ENCODE measurements at regions of chr12 and their contacts with region 1.

Region 1: DNA sequence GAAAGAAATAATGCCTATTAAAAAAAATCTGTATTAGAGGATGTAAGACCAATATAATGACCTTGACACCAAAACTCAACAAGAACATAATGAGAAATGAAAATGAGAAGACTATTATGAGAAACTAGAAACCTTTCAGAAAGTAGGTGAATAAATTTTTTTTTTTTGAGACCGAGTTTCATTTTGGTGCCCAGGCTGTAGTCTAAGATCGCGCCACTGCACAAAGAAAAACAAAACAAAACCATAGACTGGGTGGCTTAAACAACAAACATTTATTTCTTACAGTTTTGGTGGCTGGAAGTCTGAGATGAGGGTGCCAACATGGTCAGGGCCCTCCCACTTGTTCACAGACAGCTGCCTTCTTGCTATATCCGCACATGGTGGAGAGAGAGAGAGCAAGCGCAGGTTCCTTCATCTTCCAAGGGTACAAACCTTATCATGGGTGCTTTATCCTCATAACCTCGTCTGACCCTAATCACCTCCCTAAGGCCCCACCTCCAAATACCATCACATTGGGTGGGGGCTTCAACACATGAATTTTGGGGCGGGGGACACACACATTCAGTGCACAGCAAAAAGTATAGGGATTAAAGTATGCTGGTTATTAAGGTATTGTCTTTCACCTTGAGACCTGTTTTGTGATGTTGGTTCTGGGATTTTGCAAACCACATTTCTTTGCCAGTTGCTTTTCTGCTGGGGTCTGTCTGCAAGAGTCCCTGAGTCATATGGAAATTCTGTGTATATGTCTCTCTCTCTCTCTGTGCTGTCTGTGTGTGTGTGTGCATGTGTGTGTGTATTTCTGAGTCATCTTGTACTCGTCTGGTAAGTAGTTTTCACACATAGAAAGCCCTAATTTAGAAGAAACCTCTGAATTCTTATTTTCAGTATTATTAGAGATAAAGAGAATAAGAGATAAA is 26.2 kb downstream of the ZCRB1 start:
- DNase-seq: peak; percentile 80
- ATAC-seq: peak; percentile 40; the same call in 1 of the 2 replicates
- H3K4me3 ChIP-seq: no peak overlapping the region
- H3K27ac ChIP-seq: no peak overlapping the region
- H3K4me1 ChIP-seq: no peaks in the 10 kb centered on the region
- H3K27me3 ChIP-seq: no peaks in the 10 kb centered on the region
- CTCF ChIP-seq: no peak
- POLR2A ChIP-seq: no peak
- RAD21 ChIP-seq: no peak

Region 2: GRCh38 chr12:42172441-42173210 is 127.0 kb before region 1 on chr12:
- CTCF ChIA-PET with region 1: no interaction called
- POLR2A ChIA-PET with region 1: interaction called, 16 read pairs
- dilution Hi-C with region 1: no loop called
- in situ Hi-C with region 1: no loop called
- intact Hi-C with region 1: no loop called
- DNase-seq: no peak
- ATAC-seq: no peak
- H3K4me3 ChIP-seq: no peak overlapping the region
- H3K27ac ChIP-seq: no peak overlapping the region
- H3K4me1 ChIP-seq: no peaks in the 10 kb centered on the region
- H3K27me3 ChIP-seq: no peaks in the 10 kb centered on the region
- CTCF ChIP-seq: no peak
- POLR2A ChIP-seq: no peak
- RAD21 ChIP-seq: no peak

Region 3: DNA sequence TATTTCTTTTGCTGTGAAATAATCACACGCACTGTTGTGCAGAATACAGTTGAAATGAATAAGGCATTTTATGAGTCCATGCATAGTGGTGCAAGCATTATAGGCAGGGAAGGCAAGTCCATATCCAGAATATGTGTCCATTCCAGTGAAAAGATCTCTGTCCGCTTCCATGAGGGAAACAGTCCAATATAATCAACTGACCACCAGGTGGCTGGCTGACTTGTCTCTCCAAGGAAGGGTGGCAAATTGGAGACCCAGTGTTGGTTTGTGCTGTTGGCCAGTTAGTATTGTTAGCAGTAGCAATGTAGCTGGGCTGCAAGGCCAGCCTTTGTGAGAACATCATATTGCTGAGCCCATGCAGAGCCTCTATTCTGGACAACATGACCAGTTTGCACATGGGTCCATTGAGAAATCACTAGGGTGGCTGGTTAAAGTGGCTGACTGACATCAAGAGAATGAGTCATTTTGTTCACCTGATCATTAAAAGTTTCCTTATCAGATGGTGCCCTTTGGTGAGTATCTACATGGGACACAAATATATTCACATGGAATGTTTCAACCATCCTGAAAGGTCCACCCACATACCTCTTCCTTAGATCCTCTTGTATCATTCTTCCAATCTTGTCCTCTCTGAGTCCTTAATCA is 44.3 kb before region 1 on chr12:
- CTCF ChIA-PET with region 1: no interaction called
- POLR2A ChIA-PET with region 1: no interaction called
- dilution Hi-C with region 1: no loop called
- in situ Hi-C with region 1: no loop called
- intact Hi-C with region 1: no loop called
- DNase-seq: no peak
- ATAC-seq: no peak
- H3K4me3 ChIP-seq: no peak overlapping the region
- H3K27ac ChIP-seq: no peak overlapping the region
- H3K4me1 ChIP-seq: no peaks in the 10 kb centered on the region
- H3K27me3 ChIP-seq: no peaks in the 10 kb centered on the region
- CTCF ChIP-seq: no peak
- POLR2A ChIP-seq: no peak
- RAD21 ChIP-seq: no peak

Region 4: DNA sequence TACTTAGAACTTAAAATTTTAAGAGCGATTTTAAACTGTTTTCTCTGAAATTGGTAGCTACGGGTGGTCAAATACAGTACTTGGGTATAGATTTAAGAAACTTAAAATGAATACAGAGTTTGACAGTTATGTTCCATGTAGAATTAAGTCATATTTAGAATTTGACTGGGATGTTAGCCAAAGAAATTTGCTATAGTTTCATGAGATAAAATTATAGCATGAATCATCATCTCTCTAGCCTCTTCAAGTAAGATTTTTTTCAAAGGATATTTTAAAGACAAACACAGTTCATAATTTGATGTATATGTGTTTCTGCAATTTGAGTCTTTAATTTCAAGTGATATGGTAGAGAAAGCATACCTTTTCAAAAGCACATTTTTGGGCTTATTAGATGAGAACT is 14.8 kb before region 1 on chr12:
- CTCF ChIA-PET with region 1: no interaction called
- POLR2A ChIA-PET with region 1: no interaction called
- dilution Hi-C with region 1: no loop called
- in situ Hi-C with region 1: no loop called
- intact Hi-C with region 1: no loop called
- DNase-seq: peak; percentile 34
- ATAC-seq: no peak
- H3K4me3 ChIP-seq: no peak overlapping the region
- H3K27ac ChIP-seq: no peak overlapping the region
- H3K4me1 ChIP-seq: no peaks in the 10 kb centered on the region
- H3K27me3 ChIP-seq: peaks cover 3% of the 10 kb centered on the region
- CTCF ChIP-seq: no peak
- POLR2A ChIP-seq: no peak
- RAD21 ChIP-seq: no peak

Region 5: DNA sequence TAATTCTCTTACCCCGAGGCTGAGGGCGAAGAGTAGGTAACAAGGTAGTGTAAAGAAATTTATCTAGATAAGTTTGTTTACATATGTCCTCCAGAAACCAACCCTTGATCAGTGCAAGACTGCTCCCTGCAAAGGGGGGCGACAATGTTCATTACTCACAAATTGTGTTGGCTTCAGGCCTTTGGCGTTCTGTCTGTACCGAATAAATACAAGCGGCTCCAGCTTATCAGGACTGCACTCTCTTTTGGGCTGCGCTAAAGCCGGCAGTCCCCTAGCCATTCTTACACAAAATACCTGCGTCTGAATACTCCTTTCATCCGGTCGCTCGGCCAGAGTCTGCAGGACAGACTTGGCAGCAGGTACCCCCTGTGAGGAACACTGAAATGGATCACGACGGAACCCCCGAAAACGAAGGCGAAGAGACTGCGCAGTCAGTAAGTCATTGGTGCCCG is 142.7 kb after region 1 on chr12:
- CTCF ChIA-PET with region 1: no interaction called
- POLR2A ChIA-PET with region 1: no interaction called
- dilution Hi-C with region 1: no loop called
- in situ Hi-C with region 1: no loop called
- intact Hi-C with region 1: no loop called
- DNase-seq: no peak
- ATAC-seq: no peak
- H3K4me3 ChIP-seq: no peak overlapping the region
- H3K27ac ChIP-seq: no peak overlapping the region
- H3K4me1 ChIP-seq: no peaks in the 10 kb centered on the region; the same call in 1 of the 2 replicates
- H3K27me3 ChIP-seq: no peaks in the 10 kb centered on the region
- CTCF ChIP-seq: no peak
- POLR2A ChIP-seq: no peak
- RAD21 ChIP-seq: no peak

Region 6: GRCh38 chr12:42921741-42922504 is 622.3 kb after region 1 on chr12:
- CTCF ChIA-PET with region 1: no interaction called
- POLR2A ChIA-PET with region 1: no interaction called
- dilution Hi-C with region 1: no loop called
- in situ Hi-C with region 1: no loop called
- intact Hi-C with region 1: no loop called
- DNase-seq: peak; percentile 77
- ATAC-seq: peak; percentile 79
- H3K4me3 ChIP-seq: no peak overlapping the region
- H3K27ac ChIP-seq: no peak overlapping the region
- H3K4me1 ChIP-seq: peaks cover 4% of the 10 kb centered on the region
- H3K27me3 ChIP-seq: no peaks in the 10 kb centered on the region; the same call in 1 of the 2 replicates
- CTCF ChIP-seq: no peak
- POLR2A ChIP-seq: no peak
- RAD21 ChIP-seq: no peak

Measured in IMR-90 (cell line).